ENCODE measurements at regions of chr5 and their contacts with region 1.

Region 1: DNA sequence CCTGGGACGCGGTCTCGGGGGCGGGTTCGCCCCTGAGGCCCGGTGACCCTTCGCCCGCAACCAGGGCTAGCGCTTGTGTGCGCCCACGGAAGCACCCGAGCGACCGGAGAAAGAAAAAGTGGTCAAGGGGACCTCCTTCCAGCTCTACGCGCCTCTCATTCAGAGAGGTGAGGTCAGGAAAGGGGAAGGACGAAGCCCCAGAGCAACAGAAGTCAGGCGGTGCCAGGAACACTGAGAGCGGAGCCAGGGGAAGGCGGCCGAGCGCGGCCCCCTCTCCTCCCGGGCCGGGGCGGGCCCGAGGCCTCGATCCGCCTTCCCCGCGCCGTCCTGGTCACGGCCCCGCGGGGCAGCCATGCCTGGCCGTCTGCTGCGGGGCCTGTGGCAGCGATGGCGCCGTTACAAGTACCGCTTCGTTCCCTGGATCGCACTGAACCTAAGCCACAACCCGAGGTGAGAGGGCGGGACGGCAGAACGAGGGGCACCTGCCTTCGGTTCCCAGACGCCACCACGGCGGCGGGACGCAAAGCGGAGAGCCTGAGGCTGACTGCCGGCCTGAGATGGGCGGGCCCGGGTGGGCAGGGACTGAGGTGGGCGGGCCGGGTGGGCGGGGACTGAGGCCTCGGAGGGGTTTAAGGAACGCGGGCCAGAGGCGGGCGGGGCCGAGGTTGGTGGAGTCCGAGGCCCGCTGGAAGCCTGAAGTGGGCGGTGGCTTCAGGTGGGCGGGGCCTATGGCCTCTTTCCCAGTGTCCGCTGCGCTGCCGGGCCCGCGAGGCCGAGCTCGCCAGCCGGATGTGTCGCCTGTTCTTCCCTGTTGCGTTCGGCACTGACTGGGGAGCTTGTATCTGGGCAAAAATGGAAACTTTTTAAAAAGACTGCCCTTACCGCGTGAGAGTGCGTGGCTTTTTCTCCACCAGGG is at the start of gene SETD9:
- DNase-seq: peak; percentile 92 to 96 (median 96)
- H3K4me3 ChIP-seq: peak within 1 kb of the TSS; percentile 67 to 94 (median 85)
- H3K4me3 Mint-ChIP-seq: peak within 1 kb of the TSS; percentile 91 to 93
- H3K27ac ChIP-seq: peak within 1 kb of the TSS; percentile 92 to 96
- H3K27ac Mint-ChIP-seq: peak within 1 kb of the TSS; percentile 90 to 99 (median 96)
- H3K4me1 ChIP-seq: peaks cover 15 to 24% of the 10 kb centered on the region in 2 donors
- H3K4me1 Mint-ChIP-seq: peaks cover 15% of the 10 kb centered on the region
- H3K27me3 ChIP-seq: no peaks in the 10 kb centered on the region
- H3K27me3 Mint-ChIP-seq: peaks cover 0 to 4% (median 0%) of the 10 kb centered on the region in 3 donors
- CTCF ChIP-seq: no peak
- polyA plus RNA-seq, gene SETD9: 5.8 to 24.8 (median 7.8) TPM

Region 2: GRCh38 chr5:56951946-56952691 is 42.6 kb after region 1 on chr5 and contains the start of gene MIER3:
- intact Hi-C with region 1: loop called in 1 of 2 experiments (anchors 10 kb)
- DNase-seq: peak; percentile 41 to 71 (median 62)
- H3K4me3 ChIP-seq: peak within 1 kb of the TSS; percentile 63 to 90 (median 81)
- H3K4me3 Mint-ChIP-seq: peak within 1 kb of the TSS; percentile 98 to 99
- H3K27ac ChIP-seq: no peak within 1 kb of the TSS
- H3K27ac Mint-ChIP-seq: peak within 1 kb of the TSS in 3 of 7 donors; percentile 74 to 83 (median 77)
- H3K4me1 ChIP-seq: peaks cover 13 to 25% of the 10 kb centered on the region in 2 donors
- H3K4me1 Mint-ChIP-seq: peaks cover 24% of the 10 kb centered on the region
- H3K27me3 ChIP-seq: peaks cover 12 to 21% of the 10 kb centered on the region in 2 donors
- H3K27me3 Mint-ChIP-seq: peaks cover 15 to 22% (median 18%) of the 10 kb centered on the region in 3 donors
- CTCF ChIP-seq: no peak
- polyA plus RNA-seq, gene MIER3: 2.4 to 5.7 (median 2.9) TPM

Region 3: DNA sequence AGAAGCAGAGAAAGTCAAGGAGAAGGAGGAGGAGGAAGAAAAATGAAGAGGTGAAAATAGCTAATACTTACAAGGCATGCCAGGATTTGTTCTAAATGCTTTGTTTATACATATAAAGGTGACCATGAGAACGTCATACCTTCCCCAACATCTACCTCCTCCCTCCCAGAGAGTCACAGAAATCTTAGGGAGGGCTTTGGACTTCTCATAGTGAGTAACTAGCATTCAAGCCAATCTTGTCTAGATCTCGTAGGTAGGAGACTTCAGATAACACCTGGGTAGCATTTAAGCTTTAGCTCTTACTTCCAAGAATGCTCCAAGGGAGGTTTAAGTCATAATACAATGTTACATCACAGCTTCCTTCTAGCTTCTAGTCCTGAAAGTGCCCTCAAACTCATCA is 227.8 kb after region 1 on chr5:
- intact Hi-C with region 1: loop called in 1 of 2 experiments (anchors 10 kb)
- DNase-seq: no peak
- H3K4me3 ChIP-seq: peak overlapping the region in 1 of 3 experiments; percentile 10
- H3K4me3 Mint-ChIP-seq: no peak overlapping the region
- H3K27ac ChIP-seq: no peak overlapping the region
- H3K27ac Mint-ChIP-seq: no peak overlapping the region
- H3K4me1 ChIP-seq: no peaks in the 10 kb centered on the region
- H3K4me1 Mint-ChIP-seq: no peaks in the 10 kb centered on the region
- H3K27me3 ChIP-seq: no peaks in the 10 kb centered on the region
- H3K27me3 Mint-ChIP-seq: peaks cover 4 to 5% (median 4%) of the 10 kb centered on the region in 3 donors
- CTCF ChIP-seq: no peak

Region 4: GRCh38 chr5:57173185-57174127 is 263.9 kb after region 1 on chr5 and contains the start of gene GPBP1:
- intact Hi-C with region 1: loop called (anchors 2 kb)
- DNase-seq: peak; percentile 98 to 99 (median 99)
- H3K4me3 ChIP-seq: peak within 1 kb of the TSS; percentile 69 to 99 (median 93)
- H3K4me3 Mint-ChIP-seq: peak within 1 kb of the TSS; percentile 89 to 96
- H3K27ac ChIP-seq: peak within 1 kb of the TSS; percentile 98 to 100
- H3K27ac Mint-ChIP-seq: peak within 1 kb of the TSS; percentile 99 to 100 (median 99)
- H3K4me1 ChIP-seq: peaks cover 45 to 54% of the 10 kb centered on the region in 2 donors
- H3K4me1 Mint-ChIP-seq: peaks cover 38% of the 10 kb centered on the region
- H3K27me3 ChIP-seq: no peaks in the 10 kb centered on the region
- H3K27me3 Mint-ChIP-seq: peaks cover 0 to 2% (median 2%) of the 10 kb centered on the region in 3 donors
- CTCF ChIP-seq: no peak
- polyA plus RNA-seq, gene GPBP1: 23.2 to 43.7 (median 30.9) TPM

Region 5: GRCh38 chr5:58460732-58461286 is 1551.3 kb after region 1 on chr5:
- intact Hi-C with region 1: loop called in 1 of 2 experiments (anchors 10 kb)
- DNase-seq: peak; percentile 80 to 86 (median 82)
- H3K4me3 ChIP-seq: peak overlapping the region; percentile 83 to 89 (median 83)
- H3K4me3 Mint-ChIP-seq: peak overlapping the region; percentile 79 to 87
- H3K27ac ChIP-seq: peak overlapping the region; percentile 79 to 90
- H3K27ac Mint-ChIP-seq: peak overlapping the region in 5 of 7 donors; percentile 32 to 89 (median 72)
- H3K4me1 ChIP-seq: peaks cover 16 to 31% of the 10 kb centered on the region in 2 donors
- H3K4me1 Mint-ChIP-seq: peaks cover 14% of the 10 kb centered on the region
- H3K27me3 ChIP-seq: peaks cover 5 to 12% of the 10 kb centered on the region in 2 donors
- H3K27me3 Mint-ChIP-seq: peaks cover 9 to 19% (median 13%) of the 10 kb centered on the region in 3 donors
- CTCF ChIP-seq: peak; percentile 80

Measured in CD14-positive monocyte (primary cell).